AG04449 (cell line): ENCODE measurements at regions of chr9 and their contacts with region 1.

Region 1: GRCh38 chr9:110241858-110242321 is 14.4 kb downstream of the TXN start:
- DNase-seq: no peak
- H3K4me3 ChIP-seq: no peak overlapping the region
- CTCF ChIP-seq: no peak

Region 2: GRCh38 chr9:110095776-110096175 is 146.1 kb before region 1 on chr9:
- CTCF ChIA-PET with region 1: no interaction called
- POLR2A ChIA-PET with region 1: no interaction called
- DNase-seq: no peak
- H3K4me3 ChIP-seq: no peak overlapping the region
- CTCF ChIP-seq: no peak

Region 3: DNA sequence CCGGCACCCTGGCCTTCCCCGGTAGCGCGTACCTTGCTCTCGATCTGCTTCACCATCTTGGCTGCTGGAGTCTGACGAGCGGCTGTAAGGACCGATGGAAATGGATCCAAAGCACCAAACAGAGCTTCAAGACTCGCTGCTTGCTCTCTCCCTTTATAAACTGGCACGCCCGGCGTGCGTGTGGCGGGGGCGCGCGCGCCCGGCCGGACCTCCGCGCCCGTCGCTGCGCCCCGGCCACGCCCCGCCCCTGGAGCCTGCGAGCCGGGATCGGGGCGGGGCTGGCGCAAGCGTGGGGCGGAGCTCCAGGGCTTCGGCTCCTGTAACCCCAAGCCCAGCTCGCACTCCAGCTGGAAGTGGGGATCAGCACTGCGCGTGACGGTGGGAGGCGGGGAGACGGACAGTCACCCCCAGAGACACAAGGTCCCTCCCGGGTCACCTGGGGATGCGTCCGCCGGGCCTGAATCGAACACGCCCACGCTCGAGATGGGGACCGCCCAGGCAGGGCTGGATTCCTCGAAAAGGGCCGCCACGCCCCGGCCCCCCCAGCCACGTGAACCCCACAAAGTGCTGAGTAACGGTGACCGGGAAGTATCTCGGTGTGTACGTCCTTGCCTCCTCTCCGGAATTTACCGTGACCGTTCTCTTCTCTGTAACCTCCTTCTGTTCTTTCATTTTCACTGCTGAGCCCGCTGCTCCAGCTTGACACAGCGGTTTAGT is 14.6 kb after region 1 on chr9 and contains the start of gene TXN:
- CTCF ChIA-PET with region 1: interaction called, 3 read pairs
- POLR2A ChIA-PET with region 1: interaction called, 10 read pairs
- DNase-seq: no peak
- H3K4me3 ChIP-seq: peak within 1 kb of the TSS; percentile 89
- CTCF ChIP-seq: no peak